ENCODE measurements at regions of chr17 and their contacts with region 1.

Region 1: DNA sequence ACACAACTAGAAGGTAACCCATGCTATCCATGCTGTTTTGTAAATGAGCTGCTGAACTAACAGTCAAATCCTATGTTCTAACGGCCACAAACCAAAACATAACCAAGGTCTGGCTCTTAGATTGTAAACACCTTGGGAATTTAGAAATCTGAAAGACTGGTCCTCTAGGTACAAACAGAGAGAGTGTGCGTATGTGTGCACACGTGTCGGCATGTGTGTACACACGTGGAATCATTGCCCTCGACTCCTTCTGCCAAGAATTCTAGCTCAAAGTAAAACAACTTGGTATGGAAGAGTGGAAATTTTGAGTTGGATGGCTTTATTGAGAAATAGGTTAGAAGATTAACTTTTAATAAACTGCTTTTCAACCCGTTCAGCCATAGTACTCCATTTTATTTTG is 18.1 kb upstream of the GHDC start:
- DNase-seq: no peak
- ATAC-seq: peak in 6 of 8 donors; percentile 8 to 50 (median 35)
- H3K4me3 ChIP-seq: no peak overlapping the region
- H3K27ac ChIP-seq: peak overlapping the region in 9 of 10 donors; percentile 3 to 54 (median 40)
- H3K4me1 ChIP-seq: peaks cover 0 to 9% (median 0%) of the 10 kb centered on the region in 9 donors
- H3K27me3 ChIP-seq: no peaks in the 10 kb centered on the region
- CTCF ChIP-seq: no peak

Region 2: DNA sequence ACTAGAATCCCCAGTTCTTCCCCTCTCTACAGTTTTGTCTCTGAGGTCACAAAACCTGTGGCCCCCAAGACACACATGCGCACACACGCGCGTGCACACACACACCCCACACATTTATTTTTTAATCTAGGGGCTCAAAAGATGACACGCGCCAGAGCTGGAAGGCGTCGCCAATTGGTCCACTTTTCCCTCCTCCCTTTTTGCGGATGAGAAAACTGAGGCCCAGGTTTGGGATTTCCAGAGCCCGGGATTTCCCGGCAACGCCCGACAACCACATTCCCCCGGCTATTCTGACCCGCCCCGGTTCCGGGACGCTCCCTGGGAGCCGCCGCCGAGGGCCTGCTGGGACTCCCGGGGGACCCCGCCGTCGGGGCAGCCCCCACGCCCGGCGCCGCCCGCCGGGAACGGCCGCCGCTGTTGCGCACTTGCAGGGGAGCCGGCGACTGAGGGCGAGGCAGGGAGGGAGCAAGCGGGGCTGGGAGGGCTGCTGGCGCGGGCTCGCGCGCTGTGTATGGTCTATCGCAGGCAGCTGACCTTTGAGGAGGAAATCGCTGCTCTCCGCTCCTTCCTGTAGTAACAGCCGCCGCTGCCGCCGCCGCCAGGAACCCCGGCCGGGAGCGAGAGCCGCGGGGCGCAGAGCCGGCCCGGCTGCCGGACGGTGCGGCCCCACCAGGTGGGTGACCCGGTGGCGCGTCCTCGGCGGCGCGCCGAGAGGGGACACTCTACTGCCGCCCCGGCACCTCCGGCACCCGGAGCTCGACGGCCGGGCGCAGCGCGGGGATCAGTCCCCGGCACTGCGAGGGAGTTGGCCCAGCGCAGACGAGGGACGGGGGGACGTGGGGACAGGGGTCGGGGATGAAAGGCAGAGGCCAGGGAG is 75.8 kb after region 1 on chr17 and contains the start of gene STAT5A:
- intact Hi-C with region 1: no loop called
- DNase-seq: peak; percentile 91 to 92
- ATAC-seq: peak; percentile 85 to 95 (median 92)
- H3K4me3 ChIP-seq: peak within 1 kb of the TSS; percentile 50 to 83 (median 66)
- H3K27ac ChIP-seq: peak within 1 kb of the TSS; percentile 78 to 96 (median 90)
- H3K4me1 ChIP-seq: peaks cover 11 to 57% (median 30%) of the 10 kb centered on the region in 9 donors
- H3K27me3 ChIP-seq: no peaks in the 10 kb centered on the region
- CTCF ChIP-seq: peak in 1 of 9 donors; percentile 9
- total RNA-seq, gene STAT5A: 13.4 to 28.5 (median 16.1) TPM

Region 3: GRCh38 chr17:42527273-42527703 is 314.9 kb after region 1 on chr17:
- intact Hi-C with region 1: loop called in 1 of 10 experiments (anchors 10 kb)
- DNase-seq: peak in 1 of 2 donors; percentile 81
- ATAC-seq: peak; percentile 67 to 92 (median 81)
- H3K4me3 ChIP-seq: no peak overlapping the region
- H3K27ac ChIP-seq: peak overlapping the region in 8 of 10 donors; percentile 4 to 97 (median 70)
- H3K4me1 ChIP-seq: peaks cover 16 to 61% (median 40%) of the 10 kb centered on the region in 9 donors
- H3K27me3 ChIP-seq: no peaks in the 10 kb centered on the region
- CTCF ChIP-seq: peak; percentile 68 to 91 (median 86)

Region 4: DNA sequence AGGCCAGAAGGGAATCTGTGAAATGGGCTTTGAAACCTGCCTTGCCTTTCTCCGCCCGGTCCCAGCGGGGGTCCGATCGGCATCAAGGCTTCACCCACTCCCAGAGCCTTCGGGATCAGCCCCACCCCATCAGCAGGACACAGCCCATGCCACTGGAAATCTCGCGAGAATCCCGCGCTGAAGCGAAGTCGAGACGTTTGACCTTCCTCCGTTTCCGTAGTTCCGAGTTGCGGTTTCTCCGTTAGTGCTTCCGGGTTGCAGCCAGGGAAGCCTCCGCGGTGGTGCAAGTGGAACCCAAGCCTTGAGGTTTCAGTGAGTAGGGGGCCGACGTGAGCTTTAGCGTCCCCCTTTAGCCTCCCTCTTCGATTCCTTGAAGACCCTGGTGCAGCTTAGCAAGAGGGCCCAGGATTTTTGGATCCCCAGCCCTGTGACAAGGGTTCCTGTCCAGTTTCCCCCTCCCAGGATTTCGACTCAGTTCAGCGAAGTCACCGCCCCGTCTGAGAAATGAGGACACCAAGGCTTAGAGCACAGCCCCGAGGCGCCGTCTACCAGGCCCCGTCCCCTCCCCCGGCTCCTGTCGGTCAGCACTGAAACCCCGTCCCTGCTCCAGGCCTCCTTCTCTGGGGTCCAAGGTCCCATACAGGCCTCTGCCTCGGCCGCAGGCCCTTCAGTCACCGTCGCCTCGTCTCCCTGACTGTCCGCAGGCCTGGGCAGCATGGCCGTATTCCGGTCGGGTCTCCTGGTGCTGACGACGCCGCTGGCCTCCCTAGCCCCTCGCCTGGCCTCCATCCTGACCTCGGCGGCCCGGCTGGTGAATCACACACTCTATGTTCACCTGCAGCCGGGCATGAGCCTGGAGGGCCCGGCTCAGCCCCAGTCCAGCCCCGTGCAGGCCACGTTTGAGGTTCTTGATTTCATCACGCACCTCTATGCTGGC is 349.8 kb after region 1 on chr17 and contains the start of gene COASY:
- intact Hi-C with region 1: no loop called
- DNase-seq: peak; percentile 94 to 97
- ATAC-seq: peak; percentile 75 to 90 (median 84)
- H3K4me3 ChIP-seq: peak within 1 kb of the TSS; percentile 66 to 99 (median 94)
- H3K27ac ChIP-seq: peak within 1 kb of the TSS; percentile 53 to 96 (median 84)
- H3K4me1 ChIP-seq: peaks cover 11 to 47% (median 34%) of the 10 kb centered on the region in 9 donors
- H3K27me3 ChIP-seq: no peaks in the 10 kb centered on the region
- CTCF ChIP-seq: no peak
- total RNA-seq, gene COASY: 29.7 to 56.9 (median 32.9) TPM

Region 5: DNA sequence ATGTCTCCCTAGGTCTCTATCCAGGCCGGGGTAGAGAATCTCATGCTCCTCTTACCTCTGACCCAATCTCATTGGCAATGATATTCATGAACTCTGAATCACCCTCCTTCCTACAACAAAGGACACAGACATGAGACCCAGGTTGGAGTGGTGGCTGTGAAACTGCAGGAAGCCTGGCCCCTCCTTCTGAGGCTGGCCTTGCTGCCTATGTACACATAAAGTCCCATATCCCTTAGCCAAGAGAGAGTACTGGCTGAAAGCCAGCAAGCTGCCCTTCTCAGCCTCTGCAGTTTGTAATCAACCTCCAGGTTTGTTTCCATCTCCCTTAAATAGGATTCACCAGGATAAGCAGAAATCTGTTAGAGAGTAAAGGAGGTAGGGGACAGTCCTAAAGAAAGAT is 741.3 kb after region 1 on chr17:
- intact Hi-C with region 1: loop called in 1 of 10 experiments (anchors 10 kb)
- DNase-seq: no peak
- ATAC-seq: peak in 3 of 8 donors; percentile 29 to 43 (median 37)
- H3K4me3 ChIP-seq: no peak overlapping the region
- H3K27ac ChIP-seq: no peak overlapping the region
- H3K4me1 ChIP-seq: no peaks in the 10 kb centered on the region
- H3K27me3 ChIP-seq: no peaks in the 10 kb centered on the region
- CTCF ChIP-seq: no peak

Measured in heart right ventricle (tissue), 16 donors.